A549 (cell line): ENCODE measurements at regions of chr7 and their contacts with region 1.

Region 1: GRCh38 chr7:55432939-55433784 is 68.0 kb downstream of the LANCL2 start:
- DNase-seq: peak; percentile 53 to 62
- ATAC-seq: peak; percentile 60 to 86; a peak in 4 of 6 replicates
- H3K4me3 ChIP-seq: no peak overlapping the region
- H3K27ac ChIP-seq: no peak overlapping the region
- H3K4me1 ChIP-seq: no peaks in the 10 kb centered on the region
- CTCF ChIP-seq: peak; percentile 57
- EP300 ChIP-seq: no peak
- POLR2A ChIP-seq: no peak
- RAD21 ChIP-seq: peak; percentile 68 to 69

Region 2: DNA sequence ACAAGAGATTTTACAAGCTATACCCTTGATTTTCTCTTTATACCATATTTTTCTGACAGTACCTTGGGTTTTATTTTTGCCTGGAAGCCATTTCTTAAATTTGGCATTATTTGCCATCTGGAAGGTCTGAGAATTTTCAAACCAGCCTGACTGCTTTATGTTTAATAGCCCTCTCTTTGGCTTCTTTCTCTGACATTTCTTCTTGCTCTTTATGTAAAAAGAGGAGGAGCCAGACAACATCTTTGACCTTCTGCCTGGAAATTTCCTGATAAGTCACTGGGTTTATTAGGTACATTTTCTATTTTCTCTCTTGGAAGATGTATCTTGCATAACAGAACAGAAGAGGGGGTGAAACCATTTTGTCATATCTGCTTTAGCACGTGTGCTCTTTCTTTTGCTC is 11.6 kb after region 1 on chr7:
- CTCF ChIA-PET with region 1: interaction called, 16 read pairs
- POLR2A ChIA-PET with region 1: no interaction called
- DNase-seq: no peak
- ATAC-seq: no peak
- H3K4me3 ChIP-seq: no peak overlapping the region
- H3K27ac ChIP-seq: no peak overlapping the region
- H3K4me1 ChIP-seq: no peaks in the 10 kb centered on the region
- CTCF ChIP-seq: no peak
- EP300 ChIP-seq: no peak
- POLR2A ChIP-seq: no peak
- RAD21 ChIP-seq: no peak